ENCODE measurements at regions of chr5 and their contacts with region 1.

Region 1: GRCh38 chr5:52771343-52772039 is 16.2 kb upstream of the ITGA1 start:
- DNase-seq: peak; percentile 37
- H3K4me3 Mint-ChIP-seq: peak overlapping the region; percentile 3
- H3K27ac Mint-ChIP-seq: peak overlapping the region; percentile 61
- H3K4me1 Mint-ChIP-seq: peaks cover 81% of the 10 kb centered on the region
- H3K27me3 Mint-ChIP-seq: peaks cover 5% of the 10 kb centered on the region

Region 2: GRCh38 chr5:52693280-52693679 is 78.2 kb before region 1 on chr5:
- intact Hi-C with region 1: no loop called
- DNase-seq: no peak
- H3K4me3 Mint-ChIP-seq: no peak overlapping the region
- H3K27ac Mint-ChIP-seq: no peak overlapping the region
- H3K4me1 Mint-ChIP-seq: peaks cover 24% of the 10 kb centered on the region
- H3K27me3 Mint-ChIP-seq: peaks cover 16% of the 10 kb centered on the region

Region 3: GRCh38 chr5:52709171-52709925 is 62.1 kb before region 1 on chr5:
- intact Hi-C with region 1: loop called (anchors 2 kb)
- DNase-seq: peak; percentile 17
- H3K4me3 Mint-ChIP-seq: peak overlapping the region; percentile 28
- H3K27ac Mint-ChIP-seq: peak overlapping the region; percentile 59
- H3K4me1 Mint-ChIP-seq: peaks cover 74% of the 10 kb centered on the region
- H3K27me3 Mint-ChIP-seq: no peaks in the 10 kb centered on the region

Region 4: DNA sequence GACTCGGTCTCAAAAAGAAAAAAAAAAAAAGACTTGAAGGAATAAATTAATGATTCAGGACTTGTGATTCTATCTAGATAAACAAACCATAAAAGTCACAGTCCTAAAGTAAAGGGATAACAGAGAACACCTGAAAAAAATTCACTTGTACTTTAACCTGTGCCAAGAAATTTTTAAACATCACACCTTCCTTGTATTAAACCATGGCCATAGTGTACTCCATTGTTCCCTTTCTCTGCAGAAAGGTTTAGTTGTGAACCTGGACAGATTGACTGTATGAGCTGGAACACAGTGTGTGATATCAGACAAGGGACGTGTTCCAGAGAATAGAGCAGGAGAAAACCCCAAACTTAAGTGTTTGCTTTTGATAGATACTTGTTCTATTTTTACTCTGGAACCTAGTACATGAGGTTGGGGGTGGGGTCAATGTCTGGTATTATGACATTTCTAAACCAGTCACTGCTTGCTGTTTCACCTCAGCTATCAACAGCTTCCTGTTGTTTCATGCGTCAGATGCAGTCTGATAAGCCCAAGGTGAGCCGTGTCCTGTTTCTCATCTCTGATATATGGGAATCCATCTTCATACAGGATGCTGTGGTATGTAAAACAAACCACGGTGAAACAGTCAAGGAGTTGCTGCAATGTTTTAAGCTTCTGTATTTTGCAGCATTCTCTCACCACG is 46.3 kb before region 1 on chr5:
- intact Hi-C with region 1: loop called (anchors 1 kb)
- DNase-seq: peak; percentile 69
- H3K4me3 Mint-ChIP-seq: peak overlapping the region; percentile 78
- H3K27ac Mint-ChIP-seq: peak overlapping the region; percentile 85
- H3K4me1 Mint-ChIP-seq: peaks cover 61% of the 10 kb centered on the region
- H3K27me3 Mint-ChIP-seq: no peaks in the 10 kb centered on the region

Region 5: DNA sequence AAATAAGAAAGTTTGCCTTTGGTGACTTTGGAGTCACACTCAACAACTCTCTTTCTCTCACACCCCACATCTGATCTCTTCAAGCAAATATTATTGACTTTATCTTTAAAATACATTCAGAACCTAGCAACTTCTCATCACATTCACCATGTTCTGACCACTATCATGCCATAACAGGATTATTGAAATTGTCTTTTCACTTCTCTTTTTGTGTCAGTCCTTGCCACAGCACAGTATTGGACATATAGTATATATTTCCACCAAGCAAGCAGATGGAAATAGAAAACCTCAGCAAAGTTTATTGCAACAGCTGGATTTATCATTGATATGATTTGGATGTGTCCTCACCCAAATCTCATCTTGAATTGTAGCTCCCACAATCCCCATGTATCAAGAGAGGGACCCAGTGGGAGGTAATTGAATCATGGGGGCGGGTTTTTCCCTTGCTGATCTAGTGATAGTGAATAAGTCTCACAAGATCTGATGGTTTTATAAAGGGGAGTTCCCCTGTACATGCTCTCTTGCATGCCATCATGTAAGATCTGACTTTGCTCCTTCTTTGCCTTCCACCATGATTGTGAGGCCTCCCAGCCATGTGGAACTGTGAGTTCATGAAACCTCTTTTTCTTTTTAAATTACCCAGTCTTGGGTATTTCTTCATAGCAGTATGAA is 10.7 kb before region 1 on chr5:
- intact Hi-C with region 1: loop called (anchors 1 kb)
- DNase-seq: no peak
- H3K4me3 Mint-ChIP-seq: no peak overlapping the region
- H3K27ac Mint-ChIP-seq: no peak overlapping the region
- H3K4me1 Mint-ChIP-seq: peaks cover 15% of the 10 kb centered on the region
- H3K27me3 Mint-ChIP-seq: no peaks in the 10 kb centered on the region